ENCODE measurements at regions of chr18 and their contacts with region 1.

Region 1: DNA sequence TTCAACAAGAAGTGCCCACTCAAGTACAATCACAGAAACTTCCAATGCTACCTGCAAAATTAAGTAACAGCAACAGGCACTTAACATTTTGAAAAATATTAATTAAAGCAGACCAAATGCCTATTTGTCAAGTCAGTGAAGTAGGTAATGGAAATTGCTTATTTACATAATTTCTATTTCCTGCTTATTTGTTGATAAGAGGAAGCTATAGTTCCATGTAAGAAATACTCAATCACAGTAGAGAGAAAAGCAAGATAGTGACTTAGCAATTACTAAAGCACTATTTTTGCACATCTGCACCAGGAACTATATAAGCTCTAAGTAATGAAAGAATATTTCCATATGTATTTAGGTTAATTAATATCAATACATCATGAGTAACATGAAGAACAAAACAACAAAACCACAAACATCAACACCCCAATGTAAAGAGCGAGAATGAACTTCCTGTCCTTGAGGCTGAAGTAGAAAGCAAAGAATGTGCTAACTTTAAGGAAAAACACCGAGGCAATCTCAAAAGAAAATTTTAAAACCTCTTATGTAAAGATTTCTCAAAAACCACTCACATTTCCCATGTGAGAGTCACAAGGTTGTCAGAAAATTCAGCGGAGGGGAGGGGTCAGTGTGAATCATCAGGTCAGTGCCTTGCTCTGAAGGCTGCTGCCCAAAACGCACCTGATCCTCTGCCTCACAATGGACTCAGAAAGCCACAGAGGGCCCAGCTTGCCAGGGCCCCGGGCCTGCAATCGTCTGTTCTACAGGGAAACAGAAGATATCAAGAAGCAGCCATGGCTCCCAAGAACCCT is 12.5 kb downstream of the NPC1 start:
- DNase-seq: no peak
- H3K4me3 ChIP-seq: no peak overlapping the region
- H3K27ac ChIP-seq: peak overlapping the region; percentile 60
- H3K4me1 ChIP-seq: peaks cover 34% of the 10 kb centered on the region
- H3K27me3 ChIP-seq: no peaks in the 10 kb centered on the region
- CTCF ChIP-seq: no peak
- POLR2A ChIP-seq: no peak

Region 2: GRCh38 chr18:23529597-23529996 is 44.2 kb before region 1 on chr18:
- intact Hi-C with region 1: loop called (anchors 5 kb)
- DNase-seq: no peak
- H3K4me3 ChIP-seq: no peak overlapping the region
- H3K27ac ChIP-seq: peak overlapping the region; percentile 70
- H3K4me1 ChIP-seq: no peaks in the 10 kb centered on the region
- H3K27me3 ChIP-seq: no peaks in the 10 kb centered on the region
- CTCF ChIP-seq: no peak
- POLR2A ChIP-seq: no peak

Measured in vagina (tissue), 2 donors.